Activated CD4-positive, alpha-beta T cell treated with anti-CD3 and anti-CD28 coated beads, Interleukin-2, amount 10 ng/mL, durations not matched to agents 24 days and 14 days (primary cell): ENCODE measurements at regions of chrX and their contacts with region 1.

Region 1: DNA sequence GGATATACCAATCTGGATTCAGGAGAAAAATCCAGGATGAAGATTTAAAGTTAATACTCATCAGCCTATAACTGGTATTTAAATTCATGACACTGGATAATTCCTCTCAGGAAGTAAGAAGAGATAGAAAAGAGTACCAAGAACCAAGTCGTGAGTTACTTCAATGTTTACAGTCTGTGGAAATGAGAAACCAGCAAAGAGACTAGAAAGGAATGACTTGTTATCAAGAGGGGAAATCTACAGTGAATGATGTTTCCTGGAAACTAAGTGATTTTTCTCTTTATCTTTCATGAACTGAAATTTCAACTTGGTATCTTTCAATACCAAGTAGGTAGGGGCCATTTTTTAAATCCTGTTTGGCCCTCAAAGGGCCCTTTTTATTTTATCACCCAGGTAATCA is 217.9 kb upstream of the AFF2 start:
- DNase-seq: no peak
- H3K4me3 Mint-ChIP-seq: peak overlapping the region; percentile 34
- H3K27ac Mint-ChIP-seq: peak overlapping the region; percentile 60
- H3K4me1 Mint-ChIP-seq: peaks cover 18% of the 10 kb centered on the region
- H3K27me3 Mint-ChIP-seq: no peaks in the 10 kb centered on the region

Region 2: DNA sequence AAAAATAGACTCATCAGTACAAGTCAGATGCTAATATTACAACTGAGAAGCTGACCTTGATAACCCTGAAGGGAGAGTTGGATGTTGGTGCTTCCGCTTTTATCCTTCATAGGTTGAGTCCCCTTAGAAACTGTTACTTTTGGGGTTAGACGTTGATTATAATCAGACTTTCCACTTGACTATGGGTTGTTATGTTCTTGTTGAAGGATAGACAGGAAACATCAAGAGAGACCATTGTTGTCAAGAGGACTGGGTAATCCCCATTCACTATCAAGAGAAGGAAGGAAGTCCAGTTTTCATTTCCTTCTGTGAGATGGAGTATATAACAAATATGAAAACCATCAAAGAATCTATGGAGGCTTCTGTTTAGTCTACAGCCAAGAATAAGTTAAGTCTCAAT is 12.0 kb before region 1 on chrX:
- intact Hi-C with region 1: loop called (anchors 1 kb)
- DNase-seq: no peak
- H3K4me3 Mint-ChIP-seq: no peak overlapping the region
- H3K27ac Mint-ChIP-seq: no peak overlapping the region
- H3K4me1 Mint-ChIP-seq: peaks cover 4% of the 10 kb centered on the region
- H3K27me3 Mint-ChIP-seq: no peaks in the 10 kb centered on the region

Region 3: DNA sequence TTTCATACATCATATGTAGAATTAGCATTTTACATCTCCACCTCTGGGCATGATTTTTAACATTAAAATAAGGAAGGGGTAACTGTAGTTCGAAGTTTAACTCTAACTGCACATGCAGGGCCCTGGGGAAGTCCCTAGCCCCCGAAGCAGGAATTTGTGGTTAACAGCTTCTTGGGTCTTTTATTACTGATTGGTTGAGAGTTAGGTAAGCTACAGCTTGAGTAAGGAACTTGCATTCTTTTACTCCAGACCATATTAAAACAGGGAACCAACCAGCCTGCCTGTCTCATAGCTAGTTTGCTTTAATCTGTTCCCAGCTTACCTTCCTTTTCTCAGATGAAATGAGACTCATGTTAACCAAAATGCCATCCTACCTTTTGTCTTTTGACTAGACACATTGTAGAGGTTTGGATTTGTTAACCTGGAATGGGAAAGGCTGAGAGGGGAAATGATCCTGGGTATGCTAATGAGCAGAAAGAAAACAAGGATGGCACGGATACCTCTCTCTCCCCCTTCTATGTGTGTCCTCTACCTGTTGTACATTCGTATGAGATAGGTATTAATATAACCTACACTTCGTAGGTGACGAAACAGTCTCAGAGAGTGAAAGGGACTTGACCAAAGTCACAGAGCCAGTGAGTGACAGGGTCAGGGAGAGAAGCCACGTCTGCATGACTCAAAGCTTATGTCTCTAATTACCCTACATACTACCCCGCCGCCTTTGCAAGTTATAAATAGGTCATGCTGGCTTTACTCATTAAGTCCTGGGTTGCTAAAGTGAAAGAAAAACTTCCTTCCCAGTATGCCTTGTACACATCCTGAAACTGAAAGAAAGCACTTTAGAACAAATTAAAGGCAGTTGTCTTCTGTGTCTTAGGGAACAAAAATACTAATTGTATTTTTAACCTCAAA is 98.4 kb after region 1 on chrX:
- intact Hi-C with region 1: loop called (anchors 1 kb)
- DNase-seq: peak; percentile 82
- H3K4me3 Mint-ChIP-seq: peak overlapping the region; percentile 78
- H3K27ac Mint-ChIP-seq: peak overlapping the region; percentile 92
- H3K4me1 Mint-ChIP-seq: peaks cover 21% of the 10 kb centered on the region
- H3K27me3 Mint-ChIP-seq: no peaks in the 10 kb centered on the region

Region 4: GRCh38 chrX:148609515-148610327 is 327.2 kb after region 1 on chrX:
- intact Hi-C with region 1: loop called (anchors 5 kb)
- DNase-seq: no peak
- H3K4me3 Mint-ChIP-seq: no peak overlapping the region
- H3K27ac Mint-ChIP-seq: no peak overlapping the region
- H3K4me1 Mint-ChIP-seq: peaks cover 6% of the 10 kb centered on the region
- H3K27me3 Mint-ChIP-seq: no peaks in the 10 kb centered on the region